CD8-positive, alpha-beta memory T cell (primary cell): ENCODE measurements at regions of chr5 and their contacts with region 1.

Region 1: DNA sequence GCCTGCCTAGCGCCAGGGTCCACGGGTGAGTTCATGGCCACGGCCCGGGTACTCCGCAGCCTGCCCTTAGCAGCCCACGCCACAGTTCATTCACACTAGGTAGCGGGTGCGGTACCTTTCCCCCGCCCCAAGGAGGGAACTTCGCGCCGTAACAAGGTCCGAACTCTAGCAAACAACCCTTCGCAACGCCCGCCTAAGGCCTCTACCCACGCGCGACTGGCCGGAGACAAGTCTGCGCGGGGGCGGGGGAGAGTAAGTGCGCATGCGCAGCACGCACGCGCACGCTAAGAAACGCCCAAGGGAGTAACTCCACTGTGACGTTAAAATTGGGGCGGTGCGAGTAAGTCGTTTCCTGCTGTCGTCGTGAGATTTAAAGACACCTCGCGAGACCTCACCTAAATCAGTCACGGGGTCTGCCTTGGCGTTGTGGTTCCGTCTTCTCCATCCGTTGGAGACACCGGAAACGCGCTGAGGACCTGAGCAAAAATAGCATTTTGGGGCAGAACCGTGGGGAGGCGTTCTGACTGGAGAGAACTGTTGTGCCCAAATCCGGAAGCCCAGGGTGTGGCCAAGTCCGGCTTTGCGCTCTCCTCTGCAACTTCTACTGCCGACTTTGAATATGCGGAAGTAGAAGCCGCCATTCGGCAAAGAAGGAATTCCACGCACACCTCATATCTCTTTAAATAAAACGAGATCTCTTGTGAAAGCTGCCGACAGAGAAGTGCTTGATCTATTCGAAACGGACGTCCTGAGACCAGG is at the start of gene RAPGEF6:
- DNase-seq: peak; percentile 92 to 99 (median 96)
- H3K4me3 ChIP-seq: peak within 1 kb of the TSS; percentile 74
- H3K4me3 Mint-ChIP-seq: peak within 1 kb of the TSS; percentile 88 to 99 (median 96)
- H3K27ac ChIP-seq: peak within 1 kb of the TSS; percentile 94
- H3K27ac Mint-ChIP-seq: peak within 1 kb of the TSS; percentile 93 to 100 (median 99)
- H3K4me1 ChIP-seq: peaks cover 53% of the 10 kb centered on the region
- H3K4me1 Mint-ChIP-seq: peaks cover 16 to 25% (median 18%) of the 10 kb centered on the region in 3 donors
- H3K27me3 ChIP-seq: no peaks in the 10 kb centered on the region
- H3K27me3 Mint-ChIP-seq: no peaks in the 10 kb centered on the region
- total RNA-seq, gene RAPGEF6: 25.9 to 29.2 TPM

Region 2: GRCh38 chr5:131610198-131611063 is 24.7 kb before region 1 on chr5:
- CTCF ChIA-PET with region 1: no interaction called
- POLR2A ChIA-PET with region 1: no interaction called
- DNase-seq: no peak
- H3K4me3 ChIP-seq: no peak overlapping the region
- H3K4me3 Mint-ChIP-seq: no peak overlapping the region
- H3K27ac ChIP-seq: no peak overlapping the region
- H3K27ac Mint-ChIP-seq: peak overlapping the region in 2 of 8 donors; percentile 39 to 47
- H3K4me1 ChIP-seq: peaks cover 40% of the 10 kb centered on the region
- H3K4me1 Mint-ChIP-seq: peaks cover 56 to 82% (median 74%) of the 10 kb centered on the region in 3 donors
- H3K27me3 ChIP-seq: no peaks in the 10 kb centered on the region
- H3K27me3 Mint-ChIP-seq: no peaks in the 10 kb centered on the region

Region 3: GRCh38 chr5:131684595-131684994 is 49.4 kb after region 1 on chr5:
- CTCF ChIA-PET with region 1: no interaction called
- POLR2A ChIA-PET with region 1: no interaction called
- DNase-seq: no peak
- H3K4me3 ChIP-seq: no peak overlapping the region
- H3K4me3 Mint-ChIP-seq: no peak overlapping the region
- H3K27ac ChIP-seq: no peak overlapping the region
- H3K27ac Mint-ChIP-seq: no peak overlapping the region
- H3K4me1 ChIP-seq: no peaks in the 10 kb centered on the region
- H3K4me1 Mint-ChIP-seq: peaks cover 0 to 2% (median 0%) of the 10 kb centered on the region in 3 donors
- H3K27me3 ChIP-seq: no peaks in the 10 kb centered on the region
- H3K27me3 Mint-ChIP-seq: no peaks in the 10 kb centered on the region

Region 4: GRCh38 chr5:131694926-131695325 is 59.8 kb after region 1 on chr5:
- CTCF ChIA-PET with region 1: no interaction called
- POLR2A ChIA-PET with region 1: no interaction called
- DNase-seq: no peak
- H3K4me3 ChIP-seq: no peak overlapping the region
- H3K4me3 Mint-ChIP-seq: no peak overlapping the region
- H3K27ac ChIP-seq: no peak overlapping the region
- H3K27ac Mint-ChIP-seq: no peak overlapping the region
- H3K4me1 ChIP-seq: no peaks in the 10 kb centered on the region
- H3K4me1 Mint-ChIP-seq: peaks cover 0 to 2% (median 0%) of the 10 kb centered on the region in 3 donors
- H3K27me3 ChIP-seq: no peaks in the 10 kb centered on the region
- H3K27me3 Mint-ChIP-seq: no peaks in the 10 kb centered on the region

Region 5: DNA sequence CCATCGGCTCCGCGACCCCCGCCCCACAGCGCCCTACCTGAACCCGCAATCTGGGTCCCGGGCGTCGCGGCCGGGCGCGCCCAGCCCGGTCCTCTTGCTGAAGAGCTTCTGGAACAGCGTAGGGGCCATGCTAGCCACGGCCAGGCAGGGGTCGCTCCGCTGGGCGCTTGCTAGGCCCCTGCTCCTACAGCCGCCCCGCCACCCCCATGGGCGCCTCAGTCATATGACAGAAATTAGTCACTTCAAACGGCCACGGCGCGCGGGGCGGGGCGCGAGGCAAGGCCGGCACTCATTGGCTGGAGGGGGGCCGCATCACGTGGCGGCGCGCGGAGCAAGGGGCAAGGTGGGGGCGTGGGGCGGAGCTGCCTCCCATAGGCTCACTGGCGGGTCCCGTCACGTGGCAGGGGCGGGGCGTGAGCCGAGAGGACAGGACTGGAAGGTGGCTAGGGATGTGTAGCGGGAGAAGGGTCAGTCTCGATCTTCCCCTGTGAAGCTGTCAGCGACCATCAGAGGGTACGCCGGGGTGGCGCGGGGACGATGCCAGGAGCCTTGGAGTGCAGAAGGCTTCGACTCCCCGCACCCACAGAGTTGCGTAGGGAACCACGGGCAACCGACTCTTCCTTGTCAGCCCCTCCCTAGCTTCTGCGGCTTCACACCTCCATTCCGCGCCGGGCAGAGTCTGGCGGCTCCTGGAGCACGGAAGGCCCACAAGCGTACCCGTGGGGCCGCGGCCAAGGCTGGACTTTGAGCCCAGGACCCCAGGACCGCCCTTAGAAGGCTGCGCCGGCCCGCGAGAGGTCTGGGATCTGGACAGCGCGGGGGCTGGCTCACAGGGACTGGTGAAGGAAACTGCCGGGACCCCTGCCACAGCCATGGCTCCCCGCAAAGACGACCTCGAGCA is 161.9 kb after region 1 on chr5 and contains the start of gene FNIP1:
- CTCF ChIA-PET with region 1: no interaction called
- POLR2A ChIA-PET with region 1: interaction called, 18 read pairs
- DNase-seq: peak; percentile 96 to 99 (median 98)
- H3K4me3 ChIP-seq: peak within 1 kb of the TSS; percentile 71
- H3K4me3 Mint-ChIP-seq: peak within 1 kb of the TSS; percentile 96 to 99 (median 97)
- H3K27ac ChIP-seq: peak within 1 kb of the TSS; percentile 96
- H3K27ac Mint-ChIP-seq: peak within 1 kb of the TSS; percentile 95 to 100 (median 98)
- H3K4me1 ChIP-seq: peaks cover 21% of the 10 kb centered on the region
- H3K4me1 Mint-ChIP-seq: peaks cover 33 to 42% (median 41%) of the 10 kb centered on the region in 3 donors
- H3K27me3 ChIP-seq: no peaks in the 10 kb centered on the region
- H3K27me3 Mint-ChIP-seq: peaks cover 0 to 2% of the 10 kb centered on the region in 2 donors
- total RNA-seq, gene FNIP1: 15.9 to 16.0 TPM